Sigmoid colon (tissue), 7 donors: ENCODE measurements at regions of chr3 and their contacts with region 1.

Region 1: DNA sequence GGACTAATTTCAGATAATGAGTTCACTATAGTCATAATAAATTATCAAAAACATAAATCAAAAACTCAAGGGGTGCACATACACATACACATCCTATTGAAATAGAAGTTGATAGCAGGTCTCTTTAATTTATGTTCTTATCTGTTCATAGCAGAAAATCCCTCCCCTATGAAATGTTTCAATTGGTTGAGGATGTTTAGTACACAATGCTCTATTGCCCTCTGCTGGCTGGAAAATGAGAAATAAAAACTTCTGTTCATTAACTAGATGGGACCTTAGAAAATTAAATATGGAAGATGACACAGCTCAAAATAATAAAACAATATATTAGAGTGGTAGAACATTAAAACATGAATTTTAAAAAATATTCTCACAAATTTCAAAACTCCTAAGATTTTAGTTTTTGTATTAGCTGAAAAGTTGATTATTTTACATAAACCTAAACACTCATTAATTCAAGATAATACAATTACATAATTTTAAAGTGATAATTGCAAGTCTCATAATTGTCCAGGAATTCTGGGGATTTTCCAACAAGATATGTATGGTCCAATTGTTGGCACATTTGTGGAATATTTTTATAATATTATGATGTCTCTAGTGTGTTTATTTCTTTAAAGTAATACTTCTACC is 735.0 kb downstream of the ROBO1 start:
- DNase-seq: no peak
- H3K4me3 ChIP-seq: no peak overlapping the region
- H3K27ac ChIP-seq: no peak overlapping the region
- H3K4me1 ChIP-seq: no peaks in the 10 kb centered on the region
- H3K27me3 ChIP-seq: no peaks in the 10 kb centered on the region
- CTCF ChIP-seq: peak in 3 of 4 experiments; percentile 40 to 71 (median 65)
- EP300 ChIP-seq: no peak
- POLR2A ChIP-seq: no peak

Region 2: DNA sequence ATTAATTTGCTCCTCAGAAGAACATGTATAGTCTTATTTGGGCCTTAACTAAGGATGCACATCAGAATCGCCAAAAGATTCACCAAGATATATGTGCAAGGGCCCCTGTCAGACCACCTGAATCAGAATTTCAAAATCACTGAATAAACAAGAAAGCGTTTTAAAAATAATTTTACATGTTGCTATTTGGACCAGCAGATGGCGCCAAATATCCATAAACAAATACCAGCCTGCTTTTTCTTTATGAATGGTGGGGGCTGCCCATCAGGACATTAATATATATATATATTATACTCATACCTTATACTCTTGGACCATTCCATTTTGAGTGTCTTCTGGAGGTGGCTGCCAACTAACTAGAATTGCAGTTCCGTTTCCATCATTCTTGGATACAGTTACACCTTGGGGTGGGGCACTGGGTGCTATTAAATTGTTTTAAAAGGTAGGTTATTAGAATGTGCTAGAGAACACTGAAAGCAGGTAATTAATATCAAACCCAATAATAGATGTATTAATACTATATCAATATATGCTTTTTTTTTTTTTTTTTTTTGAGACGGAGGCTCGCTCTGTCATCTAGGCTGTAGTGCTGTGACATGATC is 373.3 kb before region 1 on chr3:
- intact Hi-C with region 1: loop called (anchors 1 kb)
- DNase-seq: no peak
- H3K4me3 ChIP-seq: no peak overlapping the region
- H3K27ac ChIP-seq: no peak overlapping the region
- H3K4me1 ChIP-seq: no peaks in the 10 kb centered on the region
- H3K27me3 ChIP-seq: no peaks in the 10 kb centered on the region
- CTCF ChIP-seq: peak; percentile 31 to 66 (median 56)
- EP300 ChIP-seq: no peak
- POLR2A ChIP-seq: no peak

Region 3: GRCh38 chr3:79369306-79369705 is 336.5 kb after region 1 on chr3:
- intact Hi-C with region 1: loop called (anchors 5 kb)
- DNase-seq: no peak
- H3K4me3 ChIP-seq: no peak overlapping the region
- H3K27ac ChIP-seq: no peak overlapping the region
- H3K4me1 ChIP-seq: peaks cover 0 to 25% (median 6%) of the 10 kb centered on the region in 4 donors
- H3K27me3 ChIP-seq: no peaks in the 10 kb centered on the region
- CTCF ChIP-seq: peak in 1 of 4 experiments; percentile 33
- EP300 ChIP-seq: no peak
- POLR2A ChIP-seq: no peak

Region 4: DNA sequence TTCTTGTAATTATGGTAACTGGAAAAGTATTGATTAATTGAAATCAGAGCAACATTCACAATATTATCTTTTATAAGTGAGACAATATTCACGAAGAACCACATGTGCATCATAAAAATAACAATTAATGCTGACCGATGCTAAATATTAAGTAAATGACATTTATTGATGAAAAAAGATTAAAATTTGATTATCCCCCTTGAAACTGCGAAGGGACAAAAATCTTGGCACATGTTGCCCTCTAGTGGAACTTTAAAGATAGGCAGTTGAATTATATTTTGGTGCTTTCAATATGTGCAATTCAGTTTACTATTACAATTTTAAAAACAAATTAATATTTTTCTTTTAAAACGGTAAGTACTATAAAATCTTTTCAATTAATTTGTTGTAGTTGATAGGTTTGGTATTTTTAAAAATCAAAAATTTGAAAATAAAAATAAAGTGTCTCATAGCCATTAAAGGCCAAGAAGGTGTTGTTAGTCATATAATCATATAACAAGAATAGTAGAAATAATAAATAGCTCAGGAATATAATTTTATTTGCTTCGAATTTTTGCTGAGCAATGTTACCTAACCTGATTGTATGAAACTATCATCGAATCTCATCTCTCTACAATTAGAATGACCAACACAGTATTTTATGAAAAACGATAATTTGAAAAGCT is 464.8 kb after region 1 on chr3:
- intact Hi-C with region 1: loop called (anchors 10 kb)
- DNase-seq: no peak
- H3K4me3 ChIP-seq: no peak overlapping the region
- H3K27ac ChIP-seq: no peak overlapping the region
- H3K4me1 ChIP-seq: no peaks in the 10 kb centered on the region
- H3K27me3 ChIP-seq: no peaks in the 10 kb centered on the region
- CTCF ChIP-seq: peak; percentile 14 to 72 (median 42)
- EP300 ChIP-seq: no peak
- POLR2A ChIP-seq: no peak